CD8-positive, alpha-beta T cell (primary cell): ENCODE measurements at regions of chr15 and their contacts with region 1.

Region 1: GRCh38 chr15:31326156-31326732 is 391 bp upstream of the KLF13 start:
- DNase-seq: peak; percentile 99 to 100 (median 100)
- ATAC-seq: peak; percentile 73
- H3K4me3 ChIP-seq: peak overlapping the region; percentile 55 to 82
- H3K4me3 Mint-ChIP-seq: peak overlapping the region; percentile 85
- H3K27ac ChIP-seq: peak overlapping the region; percentile 81 to 96
- H3K27ac Mint-ChIP-seq: peak overlapping the region; percentile 97
- H3K4me1 ChIP-seq: peaks cover 43% of the 10 kb centered on the region
- H3K4me1 Mint-ChIP-seq: peaks cover 60% of the 10 kb centered on the region
- H3K27me3 ChIP-seq: no peaks in the 10 kb centered on the region
- H3K27me3 Mint-ChIP-seq: no peaks in the 10 kb centered on the region
- CTCF ChIP-seq: no peak

Region 2: GRCh38 chr15:31200735-31201151 is 125.5 kb before region 1 on chr15:
- CTCF ChIA-PET with region 1: interaction called, 10 read pairs
- POLR2A ChIA-PET with region 1: interaction called, 5 read pairs
- intact Hi-C with region 1: loop called in 1 of 2 experiments (anchors 1 kb)
- DNase-seq: peak; percentile 52 to 83 (median 71)
- ATAC-seq: peak; percentile 76
- H3K4me3 ChIP-seq: no peak overlapping the region
- H3K4me3 Mint-ChIP-seq: no peak overlapping the region
- H3K27ac ChIP-seq: no peak overlapping the region
- H3K27ac Mint-ChIP-seq: no peak overlapping the region
- H3K4me1 ChIP-seq: peaks cover 20% of the 10 kb centered on the region
- H3K4me1 Mint-ChIP-seq: peaks cover 20% of the 10 kb centered on the region
- H3K27me3 ChIP-seq: no peaks in the 10 kb centered on the region
- H3K27me3 Mint-ChIP-seq: no peaks in the 10 kb centered on the region
- CTCF ChIP-seq: peak; percentile 51

Region 3: GRCh38 chr15:31265871-31266711 is 60.2 kb before region 1 on chr15:
- CTCF ChIA-PET with region 1: interaction called, 10 read pairs
- POLR2A ChIA-PET with region 1: interaction called, 62 read pairs
- intact Hi-C with region 1: loop called (anchors 1 kb)
- DNase-seq: peak; percentile 51 to 90 (median 77)
- ATAC-seq: peak; percentile 81
- H3K4me3 ChIP-seq: peak overlapping the region in 1 of 2 experiments; percentile 42
- H3K4me3 Mint-ChIP-seq: peak overlapping the region; percentile 71
- H3K27ac ChIP-seq: peak overlapping the region; percentile 71 to 72
- H3K27ac Mint-ChIP-seq: peak overlapping the region; percentile 95
- H3K4me1 ChIP-seq: peaks cover 69% of the 10 kb centered on the region
- H3K4me1 Mint-ChIP-seq: peaks cover 96% of the 10 kb centered on the region
- H3K27me3 ChIP-seq: no peaks in the 10 kb centered on the region
- H3K27me3 Mint-ChIP-seq: no peaks in the 10 kb centered on the region
- CTCF ChIP-seq: no peak

Region 4: DNA sequence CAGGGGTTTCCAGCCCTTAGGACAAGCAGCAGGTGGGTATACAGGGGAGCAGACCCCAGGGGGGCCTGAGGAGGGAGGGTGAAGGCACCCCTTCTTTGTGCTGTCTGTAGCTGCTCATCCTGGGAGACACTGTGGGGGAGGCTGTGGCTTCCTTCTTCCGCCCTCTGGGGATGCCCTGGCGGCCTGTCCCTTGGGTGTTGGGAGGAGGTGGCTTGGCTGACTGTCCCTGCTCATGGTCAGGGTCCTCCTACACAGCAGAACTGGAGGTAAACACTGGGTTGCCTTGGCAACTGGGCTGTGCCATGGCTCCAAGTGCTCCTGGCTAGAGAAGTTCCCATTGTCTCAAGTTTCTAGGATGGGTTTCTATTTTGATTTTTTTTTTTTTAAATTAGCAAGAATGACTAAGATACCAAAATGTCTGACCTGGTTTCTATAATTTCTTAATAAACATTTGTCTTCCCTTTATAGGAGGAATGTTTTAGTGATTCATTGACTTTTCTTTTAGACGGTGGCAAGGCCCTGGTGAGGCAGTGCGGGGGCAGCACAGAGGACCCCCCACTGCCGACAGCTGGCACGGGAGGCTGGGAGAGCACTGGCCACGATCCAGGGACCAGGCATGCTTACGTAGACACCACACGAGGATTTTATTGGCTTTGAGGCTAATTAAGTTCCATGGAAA is 12.8 kb after region 1 on chr15:
- CTCF ChIA-PET with region 1: interaction called, 7 read pairs
- POLR2A ChIA-PET with region 1: interaction called, 86 read pairs
- intact Hi-C with region 1: loop called (anchors 1 kb)
- DNase-seq: peak in 2 of 9 experiments; percentile 44 to 63
- ATAC-seq: no peak
- H3K4me3 ChIP-seq: peak overlapping the region in 1 of 2 experiments; percentile 12
- H3K4me3 Mint-ChIP-seq: peak overlapping the region; percentile 45
- H3K27ac ChIP-seq: peak overlapping the region; percentile 36 to 72
- H3K27ac Mint-ChIP-seq: peak overlapping the region; percentile 86
- H3K4me1 ChIP-seq: peaks cover 99% of the 10 kb centered on the region
- H3K4me1 Mint-ChIP-seq: peaks cover 99% of the 10 kb centered on the region
- H3K27me3 ChIP-seq: no peaks in the 10 kb centered on the region
- H3K27me3 Mint-ChIP-seq: no peaks in the 10 kb centered on the region
- CTCF ChIP-seq: no peak

Region 5: GRCh38 chr15:31391687-31392671 is 65.7 kb after region 1 on chr15:
- CTCF ChIA-PET with region 1: interaction called, 3 read pairs
- POLR2A ChIA-PET with region 1: interaction called, 9 read pairs
- intact Hi-C with region 1: loop called (anchors 1 to 2 kb)
- DNase-seq: peak; percentile 62 to 92 (median 86)
- ATAC-seq: peak; percentile 82
- H3K4me3 ChIP-seq: peak overlapping the region; percentile 86 to 95
- H3K4me3 Mint-ChIP-seq: peak overlapping the region; percentile 91
- H3K27ac ChIP-seq: peak overlapping the region; percentile 80 to 81
- H3K27ac Mint-ChIP-seq: peak overlapping the region; percentile 95
- H3K4me1 ChIP-seq: peaks cover 44% of the 10 kb centered on the region
- H3K4me1 Mint-ChIP-seq: peaks cover 61% of the 10 kb centered on the region
- H3K27me3 ChIP-seq: no peaks in the 10 kb centered on the region
- H3K27me3 Mint-ChIP-seq: no peaks in the 10 kb centered on the region
- CTCF ChIP-seq: no peak

Region 6: GRCh38 chr15:31483053-31483985 is 157.1 kb after region 1 on chr15:
- CTCF ChIA-PET with region 1: interaction called, 9 read pairs
- POLR2A ChIA-PET with region 1: interaction called, 22 read pairs
- intact Hi-C with region 1: loop called (anchors 1 to 2 kb)
- DNase-seq: peak; percentile 15 to 83 (median 60)
- ATAC-seq: peak; percentile 58
- H3K4me3 ChIP-seq: peak overlapping the region; percentile 60 to 67
- H3K4me3 Mint-ChIP-seq: peak overlapping the region; percentile 95
- H3K27ac ChIP-seq: peak overlapping the region in 1 of 2 experiments; percentile 59
- H3K27ac Mint-ChIP-seq: peak overlapping the region; percentile 97
- H3K4me1 ChIP-seq: peaks cover 44% of the 10 kb centered on the region
- H3K4me1 Mint-ChIP-seq: peaks cover 66% of the 10 kb centered on the region
- H3K27me3 ChIP-seq: peaks cover 0 to 3% of the 10 kb centered on the region in 2 experiments
- H3K27me3 Mint-ChIP-seq: no peaks in the 10 kb centered on the region
- CTCF ChIP-seq: no peak

Region 7: DNA sequence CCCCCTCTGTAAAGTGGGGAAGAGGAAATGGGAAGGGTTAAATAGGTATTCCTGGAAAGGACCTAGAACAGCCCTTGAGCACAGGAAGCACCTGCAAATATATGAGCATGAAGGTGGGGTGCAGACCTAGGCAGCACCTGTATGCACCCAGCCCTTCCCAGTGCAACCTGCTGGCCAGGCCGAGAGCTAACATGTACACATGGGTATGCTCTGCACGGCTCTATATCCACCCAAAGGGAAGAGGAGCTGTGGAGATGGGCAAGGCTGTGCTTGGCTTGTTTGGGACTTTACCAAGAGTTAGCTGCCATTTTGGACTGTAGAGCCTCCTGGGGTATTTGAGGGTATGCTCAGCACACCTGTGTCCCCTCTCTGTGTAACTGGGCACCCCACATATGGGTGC is 171.6 kb after region 1 on chr15:
- CTCF ChIA-PET with region 1: no interaction called
- POLR2A ChIA-PET with region 1: no interaction called
- intact Hi-C with region 1: no loop called
- DNase-seq: no peak
- ATAC-seq: no peak
- H3K4me3 ChIP-seq: no peak overlapping the region
- H3K4me3 Mint-ChIP-seq: no peak overlapping the region
- H3K27ac ChIP-seq: no peak overlapping the region
- H3K27ac Mint-ChIP-seq: no peak overlapping the region
- H3K4me1 ChIP-seq: no peaks in the 10 kb centered on the region
- H3K4me1 Mint-ChIP-seq: no peaks in the 10 kb centered on the region
- H3K27me3 ChIP-seq: no peaks in the 10 kb centered on the region
- H3K27me3 Mint-ChIP-seq: no peaks in the 10 kb centered on the region
- CTCF ChIP-seq: no peak